ENCODE measurements at regions of chrX and their contacts with region 1.

Region 1: DNA sequence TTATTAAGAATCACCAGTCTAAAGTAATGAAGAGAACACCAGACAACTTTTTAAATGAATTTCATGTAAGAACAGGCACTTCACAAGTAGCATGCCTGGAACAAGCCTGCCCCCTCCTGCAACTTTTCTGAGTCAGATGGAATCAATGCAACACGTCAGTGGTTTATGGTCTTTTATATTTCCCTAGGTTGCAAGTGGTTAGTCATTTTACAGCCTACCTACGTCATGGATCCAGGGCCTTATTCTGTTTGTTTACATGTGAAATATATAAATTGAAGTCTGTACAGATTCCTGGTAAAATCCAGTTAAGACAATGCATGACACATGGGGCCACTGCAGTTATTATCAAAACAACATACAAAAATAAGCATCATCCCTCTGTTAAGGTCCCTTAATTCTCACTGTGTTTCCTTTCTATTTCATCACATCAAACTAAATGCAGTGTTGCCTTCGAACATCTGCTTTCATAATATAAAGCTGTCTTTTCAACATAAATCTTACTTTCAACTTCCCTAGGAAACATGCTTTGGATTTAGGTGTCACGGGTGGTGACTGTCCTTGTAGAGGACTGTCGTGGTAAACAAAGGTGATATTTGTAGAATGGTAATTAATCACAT is 309.3 kb downstream of the FRMPD4 start:
- DNase-seq: peak; percentile 95
- ATAC-seq: peak; percentile 91
- H3K4me3 ChIP-seq: no peak overlapping the region
- H3K27ac ChIP-seq: peak overlapping the region; percentile 64
- H3K4me1 ChIP-seq: 0 out of 2 replicates have a peak, but pooled peaks cover 1% of the 10 kb centered on the region
- H3K27me3 ChIP-seq: no peaks in the 10 kb centered on the region
- CTCF ChIP-seq: peak; percentile 54
- POLR2A ChIP-seq: no peak
- RAD21 ChIP-seq: peak; percentile 64

Region 2: GRCh38 chrX:11787564-11787963 is 660.0 kb before region 1 on chrX:
- CTCF ChIA-PET with region 1: no interaction called
- POLR2A ChIA-PET with region 1: no interaction called
- dilution Hi-C with region 1: no loop called
- in situ Hi-C with region 1: no loop called
- intact Hi-C with region 1: loop called (anchors 5 kb)
- DNase-seq: peak; percentile 33
- ATAC-seq: peak; percentile 73
- H3K4me3 ChIP-seq: 0 out of 2 replicates have a peak overlapping the region, but pooled peaks have one; percentile 5
- H3K27ac ChIP-seq: no peak overlapping the region
- H3K4me1 ChIP-seq: no peaks in the 10 kb centered on the region
- H3K27me3 ChIP-seq: no peaks in the 10 kb centered on the region
- CTCF ChIP-seq: peak; percentile 45
- POLR2A ChIP-seq: no peak
- RAD21 ChIP-seq: peak; percentile 28

Region 3: DNA sequence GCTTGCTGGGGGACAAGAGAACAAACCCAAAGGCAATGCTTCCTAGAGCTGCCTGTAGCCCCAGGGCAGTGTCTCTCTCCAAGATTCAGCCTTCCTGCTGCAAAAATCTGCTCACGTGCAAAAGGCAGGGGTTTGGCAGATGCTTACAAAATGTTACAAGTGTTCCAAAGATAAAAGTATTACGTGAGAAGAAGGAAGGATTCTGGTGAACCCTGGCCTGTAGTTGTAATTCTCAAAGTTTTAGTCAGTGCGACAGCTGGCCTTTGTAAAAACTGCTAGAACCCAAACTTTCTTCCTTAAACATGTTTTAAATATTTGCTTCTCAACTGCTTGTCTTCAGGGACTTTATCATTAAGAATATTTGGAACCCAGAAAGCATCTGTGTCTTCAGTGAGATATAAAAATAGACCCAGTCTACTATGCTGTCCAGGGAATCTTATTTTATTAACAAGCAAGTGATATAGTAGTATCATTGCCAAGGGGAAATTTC is 77.0 kb before region 1 on chrX:
- CTCF ChIA-PET with region 1: no interaction called
- POLR2A ChIA-PET with region 1: no interaction called
- dilution Hi-C with region 1: no loop called
- in situ Hi-C with region 1: no loop called
- intact Hi-C with region 1: loop called (anchors 5 kb)
- DNase-seq: peak; percentile 94
- ATAC-seq: peak; percentile 77
- H3K4me3 ChIP-seq: no peak overlapping the region
- H3K27ac ChIP-seq: peak overlapping the region; percentile 87
- H3K4me1 ChIP-seq: peaks cover 5% of the 10 kb centered on the region
- H3K27me3 ChIP-seq: no peaks in the 10 kb centered on the region
- CTCF ChIP-seq: no peak
- POLR2A ChIP-seq: no peak
- RAD21 ChIP-seq: no peak

Region 4: GRCh38 chrX:12936947-12937346 is 489.4 kb after region 1 on chrX:
- CTCF ChIA-PET with region 1: no interaction called
- POLR2A ChIA-PET with region 1: no interaction called
- dilution Hi-C with region 1: no loop called
- in situ Hi-C with region 1: no loop called
- intact Hi-C with region 1: no loop called
- DNase-seq: no peak
- ATAC-seq: no peak
- H3K4me3 ChIP-seq: no peak overlapping the region
- H3K27ac ChIP-seq: no peak overlapping the region
- H3K4me1 ChIP-seq: no peaks in the 10 kb centered on the region
- H3K27me3 ChIP-seq: no peaks in the 10 kb centered on the region
- CTCF ChIP-seq: no peak
- POLR2A ChIP-seq: no peak
- RAD21 ChIP-seq: no peak